GM12878 (cell line): ENCODE measurements at regions of chr3 and their contacts with region 1.

Region 1: DNA sequence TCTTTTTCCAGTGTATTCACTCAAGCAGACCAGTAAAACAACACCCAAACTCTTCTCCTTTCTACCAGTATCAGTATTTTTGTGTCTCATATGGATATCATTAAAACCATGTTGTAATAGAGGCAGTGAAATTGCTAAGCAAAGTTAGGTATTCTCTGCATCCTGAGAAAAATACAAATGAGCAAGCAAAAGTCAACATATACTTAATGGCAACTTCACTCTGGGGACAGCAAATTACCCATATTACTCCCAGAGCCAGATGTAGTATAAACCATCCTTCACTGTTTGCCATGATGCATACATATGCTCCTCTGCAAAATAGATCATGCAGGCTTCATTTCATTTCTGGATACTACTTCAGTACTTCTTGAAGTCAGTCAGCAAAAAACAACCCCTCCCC is 22.1 kb downstream of the UBA5 start:
- DNase-seq: no peak
- ATAC-seq: no peak
- H3K4me3 ChIP-seq: no peak overlapping the region
- H3K27ac ChIP-seq: no peak overlapping the region
- H3K4me1 ChIP-seq: no peaks in the 10 kb centered on the region
- H3K27me3 ChIP-seq: no peaks in the 10 kb centered on the region
- CTCF ChIP-seq: no peak
- EP300 ChIP-seq: no peak
- POLR2A ChIP-seq: no peak
- RAD21 ChIP-seq: no peak

Region 2: DNA sequence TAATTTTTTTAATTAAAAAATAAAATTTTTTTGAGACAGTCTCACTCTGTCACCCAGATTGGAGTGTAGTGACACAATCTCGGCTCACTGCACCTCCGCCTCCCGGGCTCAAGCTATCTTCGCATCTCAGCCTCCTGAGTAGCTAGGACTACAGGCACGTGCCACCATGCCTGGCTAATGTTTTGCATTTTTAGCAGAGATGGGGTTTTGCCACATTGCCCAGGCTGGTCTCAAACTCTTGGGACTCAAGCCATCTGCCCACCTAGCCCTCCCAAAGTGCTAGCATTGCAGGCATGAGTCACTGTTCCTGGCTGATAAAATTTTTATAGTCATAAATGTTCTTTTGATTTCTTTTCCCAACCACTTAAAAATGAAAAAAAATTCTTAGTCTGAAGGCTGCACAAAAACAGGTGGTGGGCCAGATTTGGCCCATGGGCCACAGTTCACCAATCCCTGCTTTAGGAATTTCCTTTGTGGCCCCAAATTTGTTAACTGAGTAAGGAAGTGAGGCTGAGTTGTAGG is 12.9 kb before region 1 on chr3:
- CTCF ChIA-PET with region 1: interaction called, 11 read pairs
- POLR2A ChIA-PET with region 1: interaction called, 5 read pairs
- RAD21 ChIA-PET with region 1: no interaction called
- SMC1A ChIA-PET with region 1: interaction called, 3 read pairs
- in situ Hi-C with region 1: no loop called
- intact Hi-C with region 1: no loop called
- DNase-seq: no peak
- ATAC-seq: no peak
- H3K4me3 ChIP-seq: no peak overlapping the region
- H3K27ac ChIP-seq: no peak overlapping the region
- H3K4me1 ChIP-seq: no peaks in the 10 kb centered on the region
- H3K27me3 ChIP-seq: no peaks in the 10 kb centered on the region
- CTCF ChIP-seq: no peak
- EP300 ChIP-seq: no peak
- POLR2A ChIP-seq: no peak
- RAD21 ChIP-seq: no peak

Region 3: DNA sequence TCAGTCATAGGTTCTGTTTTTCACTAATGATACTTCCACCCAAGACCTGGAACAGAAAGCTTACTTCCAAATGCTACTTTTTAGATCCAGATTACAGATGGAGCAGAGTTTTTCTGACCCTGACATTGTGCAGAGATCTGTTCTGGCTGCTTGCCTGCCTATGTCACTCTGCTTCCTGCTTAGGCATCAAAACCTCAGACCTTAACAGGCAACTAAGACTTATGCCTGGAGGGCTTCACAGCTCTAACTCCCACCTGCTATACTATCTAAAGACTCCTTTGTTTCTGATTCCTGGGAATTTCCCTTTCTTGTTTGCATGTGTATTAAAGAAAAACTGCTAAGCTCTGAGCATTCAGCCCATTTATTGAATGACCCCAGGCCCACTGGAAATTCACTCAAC is 197.4 kb after region 1 on chr3:
- CTCF ChIA-PET with region 1: no interaction called
- POLR2A ChIA-PET with region 1: no interaction called
- RAD21 ChIA-PET with region 1: no interaction called
- SMC1A ChIA-PET with region 1: no interaction called
- in situ Hi-C with region 1: no loop called
- intact Hi-C with region 1: no loop called
- DNase-seq: no peak
- ATAC-seq: no peak
- H3K4me3 ChIP-seq: no peak overlapping the region
- H3K27ac ChIP-seq: no peak overlapping the region
- H3K4me1 ChIP-seq: no peaks in the 10 kb centered on the region
- H3K27me3 ChIP-seq: no peaks in the 10 kb centered on the region; a peak in 2 of 4 replicates
- CTCF ChIP-seq: no peak
- EP300 ChIP-seq: no peak
- POLR2A ChIP-seq: no peak
- RAD21 ChIP-seq: no peak

Region 4: GRCh38 chr3:132925256-132925930 is 243.2 kb after region 1 on chr3:
- CTCF ChIA-PET with region 1: no interaction called
- POLR2A ChIA-PET with region 1: no interaction called
- RAD21 ChIA-PET with region 1: no interaction called
- SMC1A ChIA-PET with region 1: no interaction called
- in situ Hi-C with region 1: no loop called
- intact Hi-C with region 1: no loop called
- DNase-seq: no peak
- ATAC-seq: no peak
- H3K4me3 ChIP-seq: no peak overlapping the region
- H3K27ac ChIP-seq: no peak overlapping the region
- H3K4me1 ChIP-seq: no peaks in the 10 kb centered on the region
- H3K27me3 ChIP-seq: no peaks in the 10 kb centered on the region
- CTCF ChIP-seq: no peak
- EP300 ChIP-seq: no peak
- POLR2A ChIP-seq: no peak
- RAD21 ChIP-seq: no peak